PC-3 (cell line): ENCODE measurements at regions of chr11 and their contacts with region 1.

Region 1: DNA sequence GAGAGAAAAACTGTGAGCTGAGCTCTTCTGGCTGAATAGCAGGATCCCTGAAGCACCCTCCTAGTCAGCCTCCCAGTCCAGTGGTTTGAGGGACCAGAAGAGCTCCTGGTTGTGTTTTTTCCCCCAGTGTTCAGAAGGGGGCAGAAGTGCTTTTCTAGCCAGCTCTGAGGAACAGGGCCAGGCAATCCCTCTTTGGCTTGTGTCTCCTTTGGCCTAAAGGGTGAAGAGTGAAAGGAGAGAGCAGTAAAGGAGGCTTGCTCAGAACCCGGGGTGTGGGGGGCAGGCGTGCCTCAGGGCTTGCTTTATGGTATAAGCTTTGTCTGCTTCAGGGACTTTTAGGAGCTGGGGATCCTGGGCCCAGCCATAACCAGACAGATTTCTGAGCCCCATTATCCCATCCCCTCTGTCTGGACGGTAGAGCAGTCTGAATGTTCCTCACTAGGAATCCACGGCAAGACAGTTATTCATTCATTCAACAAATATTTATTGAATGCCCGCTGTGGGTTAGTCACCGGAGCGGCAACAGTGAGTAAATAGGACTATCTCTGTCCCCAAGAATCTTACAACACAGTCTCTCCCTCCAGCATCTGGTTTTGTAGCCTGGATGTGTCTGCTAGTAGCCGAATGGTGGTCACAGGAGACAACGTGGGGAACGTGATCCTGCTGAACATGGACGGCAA is 14.5 kb downstream of the ACP2 start:
- DNase-seq: peak; percentile 87
- ATAC-seq: peak; percentile 77
- H3K4me3 ChIP-seq: peak overlapping the region; percentile 63
- H3K27ac ChIP-seq: peak overlapping the region; percentile 91
- H3K4me1 ChIP-seq: peaks cover 43% of the 10 kb centered on the region
- H3K27me3 ChIP-seq: no peaks in the 10 kb centered on the region
- CTCF ChIP-seq: peak; percentile 58

Region 2: GRCh38 chr11:47130543-47130942 is 103.6 kb before region 1 on chr11:
- CTCF ChIA-PET with region 1: no interaction called
- POLR2A ChIA-PET with region 1: no interaction called
- intact Hi-C with region 1: no loop called
- DNase-seq: no peak
- ATAC-seq: no peak
- H3K4me3 ChIP-seq: no peak overlapping the region
- H3K27ac ChIP-seq: no peak overlapping the region
- H3K4me1 ChIP-seq: no peaks in the 10 kb centered on the region
- H3K27me3 ChIP-seq: no peaks in the 10 kb centered on the region
- CTCF ChIP-seq: no peak

Region 3: GRCh38 chr11:47259178-47259977 is 25.2 kb after region 1 on chr11:
- CTCF ChIA-PET with region 1: interaction called, 33 read pairs
- POLR2A ChIA-PET with region 1: no interaction called
- intact Hi-C with region 1: no loop called
- DNase-seq: peak; percentile 82
- ATAC-seq: peak; percentile 96
- H3K4me3 ChIP-seq: peak overlapping the region; percentile 26; the same call in 1 of the 2 replicates
- H3K27ac ChIP-seq: peak overlapping the region; percentile 46
- H3K4me1 ChIP-seq: peaks cover 37% of the 10 kb centered on the region
- H3K27me3 ChIP-seq: no peaks in the 10 kb centered on the region
- CTCF ChIP-seq: peak; percentile 86

Region 4: DNA sequence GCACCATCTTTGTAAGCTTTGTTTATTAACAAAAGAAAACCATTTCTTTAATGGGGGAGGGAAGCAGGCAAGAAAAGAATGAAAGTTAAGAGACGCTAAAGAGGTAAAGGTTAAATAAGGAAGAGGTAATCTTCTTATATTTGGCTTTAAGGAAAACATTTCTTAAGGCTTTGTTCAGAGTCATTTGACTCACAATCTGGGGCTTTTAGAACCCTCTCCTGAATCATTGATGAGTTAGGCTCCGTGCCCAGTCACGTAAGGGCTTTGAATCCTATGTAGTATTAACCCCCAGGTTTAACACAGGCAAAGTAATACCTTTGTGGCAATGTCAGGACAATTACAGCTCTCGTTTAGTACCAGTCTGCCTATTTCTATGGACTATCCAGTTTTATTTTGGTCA is 61.9 kb after region 1 on chr11:
- CTCF ChIA-PET with region 1: no interaction called
- POLR2A ChIA-PET with region 1: no interaction called
- intact Hi-C with region 1: no loop called
- DNase-seq: no peak
- ATAC-seq: no peak
- H3K4me3 ChIP-seq: no peak overlapping the region
- H3K27ac ChIP-seq: no peak overlapping the region
- H3K4me1 ChIP-seq: no peaks in the 10 kb centered on the region
- H3K27me3 ChIP-seq: no peaks in the 10 kb centered on the region
- CTCF ChIP-seq: no peak